Mammary epithelial cell (primary cell): ENCODE measurements at regions of chr1 and their contacts with region 1.

Region 1: GRCh38 chr1:171644805-171645483 is 7.5 kb downstream of the MYOC start:
- DNase-seq: peak; percentile 81
- H3K4me3 ChIP-seq: no peak overlapping the region
- H3K27ac ChIP-seq: no peak overlapping the region
- H3K4me1 ChIP-seq: no peaks in the 10 kb centered on the region
- H3K27me3 ChIP-seq: no peaks in the 10 kb centered on the region
- CTCF ChIP-seq: peak; percentile 87 to 88

Region 2: DNA sequence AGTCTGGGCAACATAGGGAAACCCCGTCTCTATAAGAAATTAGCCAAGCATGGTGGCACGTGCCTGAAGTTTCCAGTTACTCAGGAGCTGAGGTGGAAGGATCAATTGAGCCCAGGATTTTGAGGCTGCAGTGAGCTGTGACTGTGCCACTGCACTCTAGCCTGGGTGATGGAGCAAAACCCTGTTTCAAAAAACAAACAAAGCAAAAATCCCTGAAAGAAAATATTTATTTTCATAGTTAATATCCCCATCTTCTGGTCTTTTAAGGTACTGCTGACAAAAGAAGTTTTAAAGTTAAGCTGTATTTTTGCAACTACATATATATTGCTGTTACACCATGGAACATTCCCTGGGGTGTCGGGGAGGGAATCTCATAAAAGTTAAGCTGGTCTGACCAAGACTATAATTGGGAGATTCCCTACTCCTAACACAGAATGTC is 70.9 kb after region 1 on chr1:
- CTCF ChIA-PET with region 1: interaction called, 10 read pairs
- dilution Hi-C with region 1: no loop called
- in situ Hi-C with region 1: no loop called
- intact Hi-C with region 1: loop called (anchors 1 kb)
- DNase-seq: peak; percentile 5
- H3K4me3 ChIP-seq: no peak overlapping the region
- H3K27ac ChIP-seq: no peak overlapping the region
- H3K4me1 ChIP-seq: peaks cover 3% of the 10 kb centered on the region
- H3K27me3 ChIP-seq: no peaks in the 10 kb centered on the region
- CTCF ChIP-seq: peak; percentile 33 to 34

Region 3: GRCh38 chr1:171741872-171742576 is 97.1 kb after region 1 on chr1 and contains the start of gene VAMP4:
- CTCF ChIA-PET with region 1: no interaction called
- dilution Hi-C with region 1: no loop called
- in situ Hi-C with region 1: no loop called
- intact Hi-C with region 1: loop called (anchors 1 kb)
- DNase-seq: peak; percentile 85
- H3K4me3 ChIP-seq: peak within 1 kb of the TSS; percentile 49 to 91 (median 77)
- H3K27ac ChIP-seq: peak within 1 kb of the TSS; percentile 93
- H3K4me1 ChIP-seq: peaks cover 35% of the 10 kb centered on the region
- H3K27me3 ChIP-seq: no peaks in the 10 kb centered on the region
- CTCF ChIP-seq: no peak
- total RNA-seq, gene VAMP4: 6.7 to 13.8 TPM

Region 4: GRCh38 chr1:171781176-171781875 is 136.4 kb after region 1 on chr1 and contains the start of gene METTL13:
- CTCF ChIA-PET with region 1: no interaction called
- dilution Hi-C with region 1: no loop called
- in situ Hi-C with region 1: no loop called
- intact Hi-C with region 1: loop called (anchors 5 kb)
- DNase-seq: peak; percentile 100
- H3K4me3 ChIP-seq: peak within 1 kb of the TSS; percentile 86 to 91 (median 88)
- H3K27ac ChIP-seq: peak within 1 kb of the TSS; percentile 80
- H3K4me1 ChIP-seq: peaks cover 23% of the 10 kb centered on the region
- H3K27me3 ChIP-seq: no peaks in the 10 kb centered on the region
- CTCF ChIP-seq: no peak
- total RNA-seq, gene METTL13: 21.5 to 31.6 TPM

Region 5: DNA sequence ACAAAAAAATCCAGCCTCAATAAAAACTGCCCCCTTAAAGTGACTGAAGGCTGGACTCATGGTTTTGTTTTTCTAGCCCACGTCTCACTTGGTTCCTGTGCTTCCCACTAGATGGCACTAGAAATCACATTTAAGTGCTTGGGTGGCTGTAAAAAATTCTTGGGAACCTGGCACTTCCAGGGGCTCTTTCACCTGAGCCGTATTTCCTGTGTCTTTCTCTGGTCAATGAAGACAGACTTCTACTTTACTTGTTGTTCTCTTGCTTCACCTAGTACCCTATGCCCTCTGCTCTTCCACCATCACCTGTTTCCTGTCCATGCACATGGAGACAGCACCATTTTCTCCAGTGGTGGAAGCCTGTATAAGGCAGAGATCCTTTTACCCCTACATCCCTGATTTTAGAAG is 156.5 kb after region 1 on chr1:
- CTCF ChIA-PET with region 1: no interaction called
- dilution Hi-C with region 1: no loop called
- in situ Hi-C with region 1: no loop called
- intact Hi-C with region 1: loop called (anchors 1 kb)
- DNase-seq: peak; percentile 35
- H3K4me3 ChIP-seq: no peak overlapping the region
- H3K27ac ChIP-seq: no peak overlapping the region
- H3K4me1 ChIP-seq: no peaks in the 10 kb centered on the region
- H3K27me3 ChIP-seq: no peaks in the 10 kb centered on the region
- CTCF ChIP-seq: peak; percentile 76 to 86

Region 6: DNA sequence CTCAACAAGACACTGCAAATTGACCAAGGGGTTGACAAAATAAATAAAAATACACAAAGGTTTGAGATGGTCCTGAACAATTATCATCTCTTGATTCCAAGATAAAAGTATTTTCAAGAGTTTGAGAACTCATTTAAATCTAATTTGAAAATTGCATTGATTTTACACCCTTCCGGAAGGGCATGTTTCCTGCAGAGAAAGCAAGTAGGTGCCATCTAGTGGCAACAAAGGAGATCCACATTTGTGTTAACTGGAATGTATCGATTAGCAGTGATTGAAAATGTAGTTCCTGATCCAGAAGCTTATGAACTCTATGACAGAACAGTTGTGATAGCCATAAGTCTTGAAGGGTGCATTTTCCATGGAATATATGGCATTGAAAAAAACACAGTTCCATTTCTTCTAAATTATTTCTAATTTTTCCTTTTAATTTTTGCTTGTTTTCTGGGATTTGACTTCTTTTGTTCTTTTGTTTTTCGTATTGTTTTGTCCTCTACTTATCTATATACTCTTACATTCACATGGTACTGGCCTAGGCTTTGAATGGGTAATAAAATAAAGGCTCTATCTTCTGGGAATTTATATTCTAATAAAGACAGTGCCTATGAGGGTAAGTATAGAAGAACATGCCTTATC is 340.0 kb after region 1 on chr1:
- CTCF ChIA-PET with region 1: interaction called, 7 read pairs
- dilution Hi-C with region 1: no loop called
- in situ Hi-C with region 1: loop called (anchors 10 to 25 kb)
- intact Hi-C with region 1: loop called (anchors 1 kb)
- DNase-seq: no peak
- H3K4me3 ChIP-seq: no peak overlapping the region
- H3K27ac ChIP-seq: no peak overlapping the region
- H3K4me1 ChIP-seq: no peaks in the 10 kb centered on the region
- H3K27me3 ChIP-seq: no peaks in the 10 kb centered on the region
- CTCF ChIP-seq: peak; percentile 80 to 81